Activated CD8-positive, alpha-beta T cell treated with anti-CD3 and anti-CD28 coated beads, Interleukin-2, amount 10 ng/mL, durations not matched to agents 7 days and 5 days (primary cell): ENCODE measurements at regions of chr7 and their contacts with region 1.

Region 1: DNA sequence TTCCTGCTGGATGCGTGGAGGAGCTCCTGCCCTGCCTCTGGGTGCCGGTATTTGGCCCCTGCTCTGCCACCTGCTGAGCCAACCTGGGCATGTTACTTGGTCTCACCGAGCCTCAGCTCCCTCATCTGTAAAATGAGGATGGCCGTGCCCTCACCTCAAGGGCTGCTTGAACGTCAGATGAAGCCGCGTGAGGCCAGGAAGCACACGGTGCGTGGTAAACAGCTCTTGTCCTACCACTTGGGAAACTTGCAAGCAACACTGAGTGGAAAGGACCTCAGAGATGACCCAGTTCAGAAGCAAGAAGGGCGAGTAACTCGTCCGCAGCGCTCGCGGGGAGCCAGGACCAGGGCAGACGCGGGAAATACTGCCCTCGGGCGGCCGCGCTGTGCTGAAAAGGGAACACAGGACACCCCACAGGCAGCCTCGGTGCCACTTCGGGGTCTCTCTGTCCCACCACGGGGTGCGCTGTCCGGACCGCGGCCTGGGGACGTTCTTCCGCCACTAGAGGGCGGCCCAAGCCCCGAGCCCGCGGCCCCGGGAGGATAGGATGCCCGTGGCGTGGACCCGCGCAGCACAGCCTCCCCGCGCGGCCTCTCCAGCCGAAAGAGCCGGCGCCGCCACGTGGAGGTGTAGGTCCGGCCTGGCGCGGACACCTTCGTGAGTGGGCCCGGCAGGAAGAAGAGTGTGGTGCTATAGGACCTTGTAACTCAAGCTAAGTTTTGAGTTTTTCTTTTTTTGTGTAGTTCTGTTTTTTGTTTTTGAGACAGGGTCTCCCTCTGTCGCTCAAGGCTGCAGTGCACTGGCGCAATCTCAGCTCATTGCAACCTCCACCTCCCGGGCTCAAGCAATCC is 94.1 kb downstream of the PRKAG2 start:
- DNase-seq: peak; percentile 83
- ATAC-seq: peak; percentile 97
- H3K4me3 Mint-ChIP-seq: peak overlapping the region; percentile 66
- H3K27ac Mint-ChIP-seq: peak overlapping the region; percentile 92
- H3K4me1 Mint-ChIP-seq: peaks cover 14% of the 10 kb centered on the region
- H3K27me3 Mint-ChIP-seq: no peaks in the 10 kb centered on the region

Region 2: DNA sequence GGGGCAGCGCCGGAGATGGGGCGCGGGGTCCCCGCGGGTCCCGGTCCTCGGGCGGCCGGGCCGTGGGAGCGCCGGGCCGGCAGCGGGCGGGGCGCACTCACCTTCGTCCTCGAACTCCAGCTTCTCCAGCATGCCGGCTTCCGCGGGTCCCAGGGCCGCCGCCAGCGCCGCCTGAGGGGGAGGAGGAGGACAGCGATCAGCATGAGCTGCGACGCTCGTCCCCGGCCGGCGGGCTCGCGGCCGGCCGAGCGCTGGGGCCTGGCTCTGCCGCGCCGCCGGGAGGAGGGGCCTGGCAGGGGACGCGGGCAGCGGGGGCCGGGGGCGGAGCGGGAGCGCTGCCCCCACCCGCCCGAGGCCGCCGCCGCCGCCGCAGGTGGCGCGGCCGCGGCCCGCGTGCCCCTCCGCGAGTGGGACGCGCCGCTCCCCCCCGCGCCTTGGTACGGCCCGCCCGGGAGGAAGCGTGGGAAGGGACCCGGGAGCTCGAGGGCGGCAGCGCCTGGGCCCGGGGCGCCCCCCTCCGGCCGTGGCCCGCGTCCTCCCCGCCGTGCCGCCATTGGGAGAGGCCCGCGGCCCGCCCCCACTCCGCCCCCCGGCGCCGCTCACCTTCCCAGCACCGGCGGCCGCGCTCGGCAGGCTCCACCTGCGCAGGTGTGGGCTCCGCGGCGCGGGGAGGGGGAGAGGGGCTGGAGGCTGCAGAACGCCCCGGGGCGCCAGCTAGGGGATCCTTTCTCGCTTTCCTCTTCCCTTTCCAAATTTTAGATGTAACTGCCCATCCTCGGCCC is 150.7 kb before region 1 on chr7:
- CTCF ChIA-PET with region 1: interaction called, 54 read pairs
- POLR2A ChIA-PET with region 1: no interaction called
- DNase-seq: peak; percentile 85
- ATAC-seq: peak; percentile 86
- H3K4me3 Mint-ChIP-seq: peak overlapping the region; percentile 94
- H3K27ac Mint-ChIP-seq: peak overlapping the region; percentile 94
- H3K4me1 Mint-ChIP-seq: peaks cover 20% of the 10 kb centered on the region
- H3K27me3 Mint-ChIP-seq: no peaks in the 10 kb centered on the region

Region 3: DNA sequence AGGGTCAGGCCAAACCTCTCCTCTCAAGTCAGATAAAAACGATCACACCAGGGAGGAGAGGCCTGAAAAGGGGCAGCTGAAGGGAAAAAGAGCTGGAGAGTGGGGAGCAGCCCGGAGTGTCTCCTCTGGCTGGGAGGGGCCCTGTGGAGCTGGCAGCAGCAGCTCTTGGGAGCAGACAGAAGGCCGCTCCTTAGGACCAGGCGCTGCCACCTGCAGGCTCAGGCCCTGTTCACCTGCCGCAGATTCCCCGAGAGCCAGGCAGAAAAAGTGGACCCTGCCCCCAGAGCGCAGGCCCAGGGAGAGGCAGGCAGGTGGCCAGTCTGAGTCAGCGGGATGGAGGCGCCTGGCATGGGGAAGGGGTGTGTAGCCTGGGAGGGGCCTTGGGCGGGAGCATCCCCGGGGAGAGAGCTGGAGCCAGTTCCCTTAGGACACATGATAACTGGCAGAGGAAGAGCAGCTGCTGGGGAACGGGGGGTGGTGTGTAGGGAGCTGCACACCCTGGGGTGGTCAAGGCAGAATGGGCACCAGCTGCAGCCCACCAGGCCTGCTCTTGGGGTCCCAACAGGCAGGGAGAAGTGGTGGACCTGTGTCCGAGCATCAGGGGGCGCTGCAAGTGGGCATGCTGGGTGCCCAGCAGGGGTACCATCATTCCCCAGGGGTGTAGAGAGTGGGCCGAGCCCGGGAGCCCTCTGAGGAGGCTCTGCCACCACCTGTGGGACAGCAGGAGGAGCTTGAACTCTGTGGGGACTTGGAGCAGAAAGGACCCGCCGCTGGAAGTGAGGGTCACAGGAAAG is 85.9 kb before region 1 on chr7:
- CTCF ChIA-PET with region 1: no interaction called
- POLR2A ChIA-PET with region 1: no interaction called
- DNase-seq: no peak
- ATAC-seq: no peak
- H3K4me3 Mint-ChIP-seq: no peak overlapping the region
- H3K27ac Mint-ChIP-seq: no peak overlapping the region
- H3K4me1 Mint-ChIP-seq: peaks cover 6% of the 10 kb centered on the region
- H3K27me3 Mint-ChIP-seq: no peaks in the 10 kb centered on the region

Region 4: GRCh38 chr7:151754142-151754590 is 28.7 kb before region 1 on chr7:
- CTCF ChIA-PET with region 1: interaction called, 37 read pairs
- POLR2A ChIA-PET with region 1: interaction called, 4 read pairs
- DNase-seq: no peak
- ATAC-seq: no peak
- H3K4me3 Mint-ChIP-seq: no peak overlapping the region
- H3K27ac Mint-ChIP-seq: no peak overlapping the region
- H3K4me1 Mint-ChIP-seq: peaks cover 24% of the 10 kb centered on the region
- H3K27me3 Mint-ChIP-seq: no peaks in the 10 kb centered on the region

Region 5: GRCh38 chr7:151769188-151769841 is 13.5 kb before region 1 on chr7:
- CTCF ChIA-PET with region 1: interaction called, 108 read pairs
- POLR2A ChIA-PET with region 1: interaction called, 8 read pairs
- DNase-seq: peak; percentile 81
- ATAC-seq: peak; percentile 93
- H3K4me3 Mint-ChIP-seq: peak overlapping the region; percentile 75
- H3K27ac Mint-ChIP-seq: peak overlapping the region; percentile 99
- H3K4me1 Mint-ChIP-seq: peaks cover 66% of the 10 kb centered on the region
- H3K27me3 Mint-ChIP-seq: no peaks in the 10 kb centered on the region

Region 6: GRCh38 chr7:151936207-151936606 is 153.4 kb after region 1 on chr7:
- CTCF ChIA-PET with region 1: interaction called, 22 read pairs
- POLR2A ChIA-PET with region 1: interaction called, 4 read pairs
- DNase-seq: peak; percentile 32
- ATAC-seq: peak; percentile 89
- H3K4me3 Mint-ChIP-seq: peak overlapping the region; percentile 60
- H3K27ac Mint-ChIP-seq: peak overlapping the region; percentile 90
- H3K4me1 Mint-ChIP-seq: peaks cover 25% of the 10 kb centered on the region
- H3K27me3 Mint-ChIP-seq: peaks cover 5% of the 10 kb centered on the region

Region 7: GRCh38 chr7:152158801-152159587 is 376.2 kb after region 1 on chr7:
- CTCF ChIA-PET with region 1: no interaction called
- POLR2A ChIA-PET with region 1: no interaction called
- DNase-seq: no peak
- ATAC-seq: peak; percentile 47
- H3K4me3 Mint-ChIP-seq: peak overlapping the region; percentile 26
- H3K27ac Mint-ChIP-seq: peak overlapping the region; percentile 64
- H3K4me1 Mint-ChIP-seq: peaks cover 12% of the 10 kb centered on the region
- H3K27me3 Mint-ChIP-seq: no peaks in the 10 kb centered on the region